PC-3 (cell line): ENCODE measurements at regions of chr21 and their contacts with region 1.

Region 1: DNA sequence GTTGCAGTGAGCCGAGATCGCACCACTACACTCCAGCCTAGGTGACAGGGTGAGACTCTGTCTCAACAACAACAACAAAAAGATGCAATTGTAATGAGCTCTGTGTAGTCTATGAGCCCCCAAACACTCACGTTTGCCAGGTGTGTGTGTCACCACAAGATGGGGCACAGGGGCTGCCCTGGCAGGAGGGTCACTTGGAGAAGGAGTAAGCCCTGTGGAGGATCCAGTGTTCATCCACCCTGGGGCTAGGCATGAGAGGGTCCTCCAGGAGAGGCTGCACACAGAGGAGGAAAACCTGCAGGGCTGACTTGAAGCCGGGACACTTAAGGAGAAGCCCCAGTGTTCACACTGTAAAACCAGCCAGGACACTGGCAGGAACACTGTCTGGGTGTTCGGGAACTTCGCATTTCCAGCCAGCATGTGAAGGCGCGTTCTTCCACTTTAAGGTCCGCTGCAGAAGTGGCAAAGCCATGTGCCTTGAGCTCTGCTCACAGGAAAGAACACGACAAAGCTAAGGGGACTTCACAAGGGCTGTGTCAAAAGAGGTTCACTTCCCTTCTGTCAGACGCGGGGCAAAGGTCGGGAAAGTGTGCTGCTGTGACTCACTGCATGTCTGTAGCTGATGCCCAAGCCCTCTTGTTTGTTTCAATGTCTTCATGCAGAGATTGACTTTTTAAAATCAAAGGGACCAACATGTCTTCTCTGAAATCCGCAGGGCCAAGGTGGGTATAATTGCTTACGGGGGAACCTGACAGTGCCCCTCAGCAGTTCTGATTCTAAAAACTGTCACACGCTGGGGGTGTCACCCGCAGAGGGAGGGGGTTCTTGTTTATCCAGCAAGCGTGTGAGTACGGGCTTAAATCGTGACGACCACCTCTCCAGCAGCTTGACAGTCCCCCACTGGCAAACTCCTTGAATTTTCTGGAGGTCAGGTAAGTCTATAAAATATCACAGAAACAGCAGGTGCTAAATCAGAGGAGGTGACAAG is 102.8 kb downstream of the RIPK4 start:
- DNase-seq: peak; percentile 63
- ATAC-seq: peak; percentile 60
- H3K4me3 ChIP-seq: no peak overlapping the region; the same call in 1 of the 2 replicates
- H3K27ac ChIP-seq: peak overlapping the region; percentile 89
- H3K4me1 ChIP-seq: peaks cover 34% of the 10 kb centered on the region
- H3K27me3 ChIP-seq: no peaks in the 10 kb centered on the region
- CTCF ChIP-seq: no peak

Region 2: GRCh38 chr21:41648591-41649031 is 15.5 kb before region 1 on chr21:
- CTCF ChIA-PET with region 1: no interaction called
- POLR2A ChIA-PET with region 1: interaction called, 14 read pairs
- intact Hi-C with region 1: no loop called
- DNase-seq: peak; percentile 48
- ATAC-seq: peak; percentile 25
- H3K4me3 ChIP-seq: no peak overlapping the region
- H3K27ac ChIP-seq: peak overlapping the region; percentile 36
- H3K4me1 ChIP-seq: peaks cover 51% of the 10 kb centered on the region
- H3K27me3 ChIP-seq: no peaks in the 10 kb centered on the region
- CTCF ChIP-seq: no peak